ENCODE measurements at regions of chr7 and their contacts with region 1.

Region 1: DNA sequence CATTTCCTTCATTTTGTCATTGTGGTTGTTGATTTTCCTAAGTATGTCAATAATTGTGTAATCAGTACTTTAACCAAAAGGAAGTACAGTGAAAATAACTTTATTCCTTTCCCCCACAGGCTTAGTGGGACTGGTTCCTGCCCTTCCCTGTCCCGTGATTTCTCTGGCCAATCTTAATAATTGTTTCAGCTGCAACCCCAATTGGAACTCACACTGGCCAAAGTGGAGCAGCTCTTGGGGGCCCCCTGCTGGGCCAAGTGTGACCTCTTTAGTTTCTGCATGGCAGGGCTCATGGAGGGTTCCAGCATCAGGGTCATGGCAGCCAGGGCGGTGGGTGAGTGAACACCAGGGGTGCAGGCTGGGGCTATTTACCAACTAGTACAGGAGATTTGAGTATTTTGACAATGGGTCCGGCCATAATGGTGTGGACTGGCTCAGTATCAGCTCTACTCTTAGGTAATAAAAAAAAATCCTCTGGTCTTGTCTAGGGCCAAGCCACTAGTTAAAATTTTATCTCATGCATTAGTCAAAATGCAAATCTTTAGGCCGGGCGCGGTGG is 31.7 kb downstream of the CYCS start:
- DNase-seq: peak; percentile 23 to 91 (median 58)

Region 2: DNA sequence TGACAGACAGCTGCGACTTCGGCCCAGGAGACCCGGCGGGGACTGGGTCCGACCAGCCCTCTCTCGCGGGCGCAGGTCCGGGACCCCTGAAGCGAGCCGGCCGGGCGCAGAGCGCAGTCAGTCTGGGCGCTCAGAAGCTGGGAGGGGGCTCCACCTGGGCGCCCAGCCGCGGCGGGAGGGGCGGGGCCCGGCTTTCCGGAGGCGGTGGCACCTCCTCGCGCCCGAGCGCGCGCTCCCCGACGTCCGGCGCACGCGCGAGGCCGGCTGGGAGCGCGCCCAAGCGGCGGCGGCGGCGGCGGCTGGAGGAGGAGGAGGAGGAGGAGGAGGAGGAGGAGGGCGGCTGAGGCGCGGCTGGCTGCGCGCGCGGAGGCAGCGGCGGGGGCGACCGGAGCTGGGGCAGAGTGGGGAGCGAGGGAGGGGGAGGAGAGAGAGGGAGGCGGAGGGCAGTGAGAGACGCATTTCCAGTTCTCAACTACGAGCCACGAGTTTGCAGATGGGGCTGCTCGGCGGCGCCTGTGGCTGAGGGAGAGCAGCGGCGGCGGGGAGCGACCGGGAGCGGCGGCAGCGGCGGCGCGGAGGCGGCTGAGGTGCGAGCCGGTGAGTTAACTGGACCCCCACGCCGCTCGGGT is 520.2 kb before region 1 on chr7 and contains the start of gene PALS2:
- intact Hi-C with region 1: loop called (anchors 10 kb)
- DNase-seq: peak; percentile 48 to 95 (median 62)

Region 3: DNA sequence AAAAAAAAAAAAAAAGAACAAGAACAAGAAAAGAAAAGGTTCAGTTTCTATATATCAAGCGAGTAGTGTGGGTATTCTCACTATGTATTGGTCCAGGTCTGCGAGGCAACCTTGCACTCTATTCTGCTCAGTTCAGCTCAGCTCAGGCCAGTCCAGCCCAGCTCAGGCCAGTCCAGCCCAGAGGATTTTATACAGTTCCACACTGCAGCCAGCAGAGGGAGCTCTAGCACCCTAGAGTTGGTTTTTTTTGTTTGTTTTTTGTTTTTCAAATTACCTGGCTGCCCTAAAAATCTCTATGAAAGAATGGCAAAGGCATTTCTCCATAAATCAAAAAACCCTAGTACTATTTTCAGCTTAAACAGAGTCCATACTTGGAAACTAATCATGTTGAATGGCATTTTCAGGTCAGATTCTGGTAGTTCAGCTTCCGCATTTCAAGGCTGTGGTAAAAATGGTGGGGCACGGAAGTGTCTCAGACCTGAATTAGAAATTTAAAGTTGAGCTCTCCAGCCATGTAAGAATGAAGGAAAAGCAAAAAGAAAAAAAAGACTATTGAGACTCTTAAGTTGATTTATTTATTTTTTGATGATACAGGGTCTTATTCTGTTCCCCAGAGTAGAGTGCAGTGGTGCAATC is 280.9 kb before region 1 on chr7:
- intact Hi-C with region 1: loop called (anchors 5 kb)
- DNase-seq: peak in 7 of 10 donors; percentile 27 to 88 (median 56)